ENCODE measurements at regions of chr17 and their contacts with region 1.

Region 1: GRCh38 chr17:51275381-51275780 is 15.0 kb downstream of the UTP18 start:
- DNase-seq: no peak
- ATAC-seq: no peak
- H3K4me3 ChIP-seq: no peak overlapping the region
- H3K27ac ChIP-seq: no peak overlapping the region
- H3K4me1 ChIP-seq: no peaks in the 10 kb centered on the region
- H3K27me3 ChIP-seq: no peaks in the 10 kb centered on the region
- CTCF ChIP-seq: no peak
- EP300 ChIP-seq: no peak
- POLR2A ChIP-seq: no peak
- RAD21 ChIP-seq: no peak

Region 2: GRCh38 chr17:51214920-51215319 is 60.5 kb before region 1 on chr17:
- CTCF ChIA-PET with region 1: no interaction called
- POLR2A ChIA-PET with region 1: no interaction called
- RAD21 ChIA-PET with region 1: no interaction called
- SMC1A ChIA-PET with region 1: no interaction called
- in situ Hi-C with region 1: no loop called
- intact Hi-C with region 1: no loop called
- DNase-seq: no peak
- ATAC-seq: no peak
- H3K4me3 ChIP-seq: no peak overlapping the region
- H3K27ac ChIP-seq: no peak overlapping the region
- H3K4me1 ChIP-seq: no peaks in the 10 kb centered on the region
- H3K27me3 ChIP-seq: no peaks in the 10 kb centered on the region
- CTCF ChIP-seq: no peak
- EP300 ChIP-seq: no peak
- POLR2A ChIP-seq: no peak
- RAD21 ChIP-seq: no peak

Region 3: DNA sequence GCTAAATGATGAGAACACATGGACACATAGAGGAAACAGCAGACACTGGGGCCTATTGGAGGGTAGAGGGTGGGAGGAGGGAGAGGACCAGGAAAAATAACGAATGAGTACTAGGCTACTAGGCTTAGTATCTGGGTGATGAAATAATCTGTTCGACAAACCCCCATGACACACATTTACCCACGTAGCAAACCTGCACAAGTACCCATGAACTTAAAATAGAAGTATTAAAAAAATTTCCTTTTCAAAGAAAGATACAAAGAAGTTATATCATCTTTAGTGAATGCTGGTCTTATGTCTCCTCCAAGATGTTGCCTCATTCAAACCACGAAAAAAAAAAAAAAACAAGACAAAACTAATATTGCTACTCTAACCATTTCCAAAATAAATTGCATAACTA is 47.2 kb before region 1 on chr17:
- CTCF ChIA-PET with region 1: no interaction called
- POLR2A ChIA-PET with region 1: no interaction called
- RAD21 ChIA-PET with region 1: no interaction called
- SMC1A ChIA-PET with region 1: no interaction called
- in situ Hi-C with region 1: no loop called
- intact Hi-C with region 1: no loop called
- DNase-seq: no peak
- ATAC-seq: no peak
- H3K4me3 ChIP-seq: no peak overlapping the region
- H3K27ac ChIP-seq: no peak overlapping the region
- H3K4me1 ChIP-seq: peaks cover 16% of the 10 kb centered on the region
- H3K27me3 ChIP-seq: no peaks in the 10 kb centered on the region
- CTCF ChIP-seq: no peak
- EP300 ChIP-seq: no peak
- POLR2A ChIP-seq: no peak
- RAD21 ChIP-seq: no peak

Region 4: DNA sequence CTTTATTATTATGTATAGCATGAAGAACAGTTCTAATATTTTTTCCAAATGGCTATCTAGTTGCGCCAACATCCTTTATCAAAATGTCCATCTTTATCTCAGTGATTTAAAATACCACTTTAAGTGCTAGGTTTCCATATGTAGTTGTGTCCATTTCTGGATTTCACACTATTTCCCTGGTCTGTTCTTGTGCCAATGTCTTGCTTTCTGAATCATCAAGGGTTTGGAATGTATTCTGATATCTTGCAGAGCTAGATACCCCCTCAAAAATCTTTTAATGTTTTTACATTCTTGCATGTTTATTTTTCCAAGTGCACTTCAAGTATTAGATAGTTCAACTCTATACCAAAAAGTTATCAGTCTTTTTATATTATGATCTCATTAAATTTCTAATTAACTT is 29.8 kb before region 1 on chr17:
- CTCF ChIA-PET with region 1: no interaction called
- POLR2A ChIA-PET with region 1: no interaction called
- RAD21 ChIA-PET with region 1: no interaction called
- SMC1A ChIA-PET with region 1: no interaction called
- in situ Hi-C with region 1: no loop called
- intact Hi-C with region 1: no loop called
- DNase-seq: no peak
- ATAC-seq: no peak
- H3K4me3 ChIP-seq: no peak overlapping the region
- H3K27ac ChIP-seq: no peak overlapping the region
- H3K4me1 ChIP-seq: no peaks in the 10 kb centered on the region
- H3K27me3 ChIP-seq: no peaks in the 10 kb centered on the region
- CTCF ChIP-seq: no peak
- EP300 ChIP-seq: no peak
- POLR2A ChIP-seq: no peak
- RAD21 ChIP-seq: no peak

Region 5: GRCh38 chr17:51298508-51299371 is 23.4 kb after region 1 on chr17:
- CTCF ChIA-PET with region 1: interaction called, 12 read pairs
- POLR2A ChIA-PET with region 1: no interaction called
- RAD21 ChIA-PET with region 1: no interaction called
- SMC1A ChIA-PET with region 1: no interaction called
- in situ Hi-C with region 1: no loop called
- intact Hi-C with region 1: no loop called
- DNase-seq: no peak
- ATAC-seq: 0 out of 3 replicates have a peak, but pooled peaks have one; percentile 38
- H3K4me3 ChIP-seq: no peak overlapping the region
- H3K27ac ChIP-seq: no peak overlapping the region
- H3K4me1 ChIP-seq: no peaks in the 10 kb centered on the region
- H3K27me3 ChIP-seq: no peaks in the 10 kb centered on the region
- CTCF ChIP-seq: peak; percentile 62 to 68 (median 63); a peak in 5 of 6 replicates
- EP300 ChIP-seq: no peak
- POLR2A ChIP-seq: no peak
- RAD21 ChIP-seq: peak; percentile 63

Region 6: GRCh38 chr17:51319186-51319585 is 43.8 kb after region 1 on chr17:
- CTCF ChIA-PET with region 1: no interaction called
- POLR2A ChIA-PET with region 1: no interaction called
- RAD21 ChIA-PET with region 1: no interaction called
- SMC1A ChIA-PET with region 1: no interaction called
- in situ Hi-C with region 1: no loop called
- intact Hi-C with region 1: no loop called
- DNase-seq: no peak
- ATAC-seq: no peak
- H3K4me3 ChIP-seq: no peak overlapping the region
- H3K27ac ChIP-seq: no peak overlapping the region
- H3K4me1 ChIP-seq: no peaks in the 10 kb centered on the region
- H3K27me3 ChIP-seq: no peaks in the 10 kb centered on the region
- CTCF ChIP-seq: no peak
- EP300 ChIP-seq: no peak
- POLR2A ChIP-seq: no peak
- RAD21 ChIP-seq: no peak